PC-3 (cell line): ENCODE measurements at regions of chr20 and their contacts with region 1.

Region 1: GRCh38 chr20:24992487-24993205 is at the start of gene APMAP:
- DNase-seq: peak; percentile 96
- ATAC-seq: peak; percentile 90
- H3K4me3 ChIP-seq: peak within 1 kb of the TSS; percentile 88
- H3K27ac ChIP-seq: peak within 1 kb of the TSS; percentile 55
- H3K4me1 ChIP-seq: peaks cover 50% of the 10 kb centered on the region
- H3K27me3 ChIP-seq: no peaks in the 10 kb centered on the region
- CTCF ChIP-seq: no peak
- total RNA-seq, gene APMAP: 134 and 137 TPM in 2 replicates

Region 2: DNA sequence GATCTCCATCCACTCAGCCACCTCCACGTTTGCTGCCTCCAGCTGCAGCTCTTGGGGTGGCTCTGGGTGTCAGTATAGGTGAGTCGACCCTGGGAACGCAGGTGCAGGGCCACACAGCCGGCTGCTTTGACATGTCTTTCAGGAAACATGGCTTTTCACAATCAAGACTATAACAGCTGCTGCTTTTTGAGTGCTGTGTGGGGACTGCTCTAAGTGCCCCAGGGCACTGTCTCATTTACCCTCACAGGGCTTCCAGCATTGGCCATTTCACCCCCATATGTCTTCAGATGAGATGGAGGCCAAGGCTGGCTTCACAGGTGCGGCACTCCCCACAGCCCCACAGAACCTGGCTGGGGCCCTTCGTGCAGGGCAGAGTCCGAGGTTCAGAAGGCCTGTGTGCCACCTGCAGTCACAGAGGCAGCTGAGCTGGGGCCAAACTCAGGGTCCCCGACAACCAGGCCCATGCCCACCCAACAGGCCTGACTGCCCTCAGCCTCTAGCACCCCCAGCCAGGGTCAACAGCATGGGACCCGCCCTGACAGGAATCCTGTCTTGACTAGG is 58.5 kb before region 1 on chr20:
- CTCF ChIA-PET with region 1: interaction called, 4 read pairs
- POLR2A ChIA-PET with region 1: no interaction called
- intact Hi-C with region 1: loop called (anchors 5 kb)
- DNase-seq: no peak
- ATAC-seq: no peak
- H3K4me3 ChIP-seq: no peak overlapping the region
- H3K27ac ChIP-seq: no peak overlapping the region
- H3K4me1 ChIP-seq: peaks cover 39% of the 10 kb centered on the region
- H3K27me3 ChIP-seq: no peaks in the 10 kb centered on the region
- CTCF ChIP-seq: no peak

Region 3: GRCh38 chr20:25017257-25018115 is 24.8 kb after region 1 on chr20:
- CTCF ChIA-PET with region 1: no interaction called
- POLR2A ChIA-PET with region 1: no interaction called
- intact Hi-C with region 1: no loop called
- DNase-seq: peak; percentile 82
- ATAC-seq: peak; percentile 66
- H3K4me3 ChIP-seq: no peak overlapping the region
- H3K27ac ChIP-seq: no peak overlapping the region
- H3K4me1 ChIP-seq: peaks cover 16% of the 10 kb centered on the region
- H3K27me3 ChIP-seq: no peaks in the 10 kb centered on the region
- CTCF ChIP-seq: no peak

Region 4: DNA sequence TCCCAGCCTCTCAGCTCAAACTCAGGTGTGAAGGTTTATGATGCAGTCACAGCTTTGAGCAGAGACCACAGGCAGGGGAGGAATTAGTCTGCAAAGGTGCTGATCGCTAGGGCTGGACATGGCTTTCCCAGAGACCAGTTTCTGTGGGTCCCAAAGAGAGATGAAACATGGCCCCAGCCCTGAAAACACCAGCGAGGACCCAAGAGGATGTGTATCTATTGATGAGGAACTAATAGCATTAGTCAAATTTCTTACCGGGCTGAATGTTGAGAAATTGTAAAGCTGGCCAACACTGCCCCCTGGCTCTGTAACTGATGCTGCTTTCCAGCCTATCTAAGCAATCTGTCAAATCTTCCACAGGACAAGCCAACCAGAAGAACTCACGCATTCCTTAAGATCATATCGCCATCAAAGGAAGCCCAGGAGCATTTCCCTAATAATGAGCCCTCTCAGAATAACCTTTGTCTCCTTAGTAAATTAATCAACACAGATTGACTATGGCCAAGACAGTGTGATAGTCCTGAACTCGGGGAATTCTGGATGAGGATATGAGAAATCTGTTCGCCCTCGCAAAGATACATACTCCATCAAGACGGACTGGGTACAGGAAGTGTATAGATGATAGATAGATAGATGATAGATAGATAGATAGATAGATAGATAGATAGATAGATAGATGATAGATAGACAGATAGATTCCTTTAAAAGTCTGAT is 73.1 kb after region 1 on chr20:
- CTCF ChIA-PET with region 1: interaction called, 13 read pairs
- POLR2A ChIA-PET with region 1: no interaction called
- intact Hi-C with region 1: loop called (anchors 1 kb)
- DNase-seq: peak; percentile 84
- ATAC-seq: peak; percentile 87
- H3K4me3 ChIP-seq: no peak overlapping the region
- H3K27ac ChIP-seq: no peak overlapping the region
- H3K4me1 ChIP-seq: peaks cover 3% of the 10 kb centered on the region; the same call in 1 of the 2 replicates
- H3K27me3 ChIP-seq: peaks cover 49% of the 10 kb centered on the region
- CTCF ChIP-seq: peak; percentile 95

Region 5: DNA sequence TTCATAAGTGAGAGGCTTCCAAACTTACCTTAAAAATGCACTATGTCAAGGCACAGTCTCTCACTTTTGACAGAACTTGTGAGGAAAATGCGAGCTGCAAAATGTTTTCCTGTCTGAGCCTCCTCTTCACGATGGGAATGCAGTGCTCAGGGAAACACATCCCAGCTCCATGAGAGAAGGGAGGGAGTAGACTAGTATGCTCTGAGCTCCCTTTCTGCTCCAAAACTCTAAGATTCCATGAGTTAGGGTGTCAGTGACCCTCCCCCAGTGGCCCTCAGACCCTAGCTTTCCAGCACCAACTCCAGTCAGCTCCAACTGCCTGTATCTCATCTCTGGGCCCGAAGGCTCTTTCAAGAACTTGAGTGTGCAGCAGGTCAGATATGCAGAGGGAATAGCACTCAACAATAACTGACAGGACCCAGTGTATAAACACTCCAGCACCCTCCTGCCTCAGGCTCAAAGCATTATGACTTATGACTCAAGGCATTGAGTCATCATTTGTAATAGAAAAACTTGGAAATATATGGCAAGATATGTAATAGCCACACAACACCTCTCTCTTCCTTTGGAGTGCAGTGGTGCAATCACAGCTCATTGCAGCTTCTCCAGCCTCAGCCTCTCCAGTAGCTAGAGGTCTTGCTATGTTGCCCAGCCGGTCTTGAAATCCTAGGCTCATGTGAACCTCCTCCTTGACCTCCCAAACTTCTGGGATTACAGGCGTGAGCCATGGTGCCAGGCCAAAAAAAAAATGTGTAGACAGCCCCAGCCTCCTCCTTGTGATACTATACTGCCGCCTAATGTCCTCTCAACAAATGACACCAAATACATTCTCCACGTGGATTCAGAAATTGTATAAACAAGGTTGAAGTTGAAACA is 186.2 kb after region 1 on chr20:
- CTCF ChIA-PET with region 1: interaction called, 7 read pairs
- POLR2A ChIA-PET with region 1: no interaction called
- intact Hi-C with region 1: loop called (anchors 1 kb)
- DNase-seq: peak; percentile 99
- ATAC-seq: peak; percentile 94
- H3K4me3 ChIP-seq: peak overlapping the region; percentile 21; the same call in 1 of the 2 replicates
- H3K27ac ChIP-seq: peak overlapping the region; percentile 52
- H3K4me1 ChIP-seq: peaks cover 34% of the 10 kb centered on the region
- H3K27me3 ChIP-seq: no peaks in the 10 kb centered on the region
- CTCF ChIP-seq: peak; percentile 99

Region 6: GRCh38 chr20:25247956-25248785 is 255.5 kb after region 1 on chr20 and contains the start of gene PYGB:
- CTCF ChIA-PET with region 1: interaction called, 5 read pairs
- POLR2A ChIA-PET with region 1: interaction called, 3 read pairs
- intact Hi-C with region 1: loop called (anchors 1 kb)
- DNase-seq: peak; percentile 79
- ATAC-seq: peak; percentile 64
- H3K4me3 ChIP-seq: peak within 1 kb of the TSS; percentile 92
- H3K27ac ChIP-seq: peak within 1 kb of the TSS; percentile 72
- H3K4me1 ChIP-seq: peaks cover 50% of the 10 kb centered on the region
- H3K27me3 ChIP-seq: no peaks in the 10 kb centered on the region
- CTCF ChIP-seq: no peak
- total RNA-seq, gene PYGB: 216 and 245 TPM in 2 replicates

Region 7: GRCh38 chr20:25399037-25399430 is 406.4 kb after region 1 on chr20:
- CTCF ChIA-PET with region 1: no interaction called
- POLR2A ChIA-PET with region 1: no interaction called
- intact Hi-C with region 1: loop called (anchors 1 kb)
- DNase-seq: peak; percentile 96
- ATAC-seq: peak; percentile 76
- H3K4me3 ChIP-seq: no peak overlapping the region
- H3K27ac ChIP-seq: no peak overlapping the region
- H3K4me1 ChIP-seq: peaks cover 30% of the 10 kb centered on the region
- H3K27me3 ChIP-seq: no peaks in the 10 kb centered on the region
- CTCF ChIP-seq: peak; percentile 87